Activated CD8-positive, alpha-beta T cell treated with anti-CD3 and anti-CD28 coated beads for 36 hours (primary cell): ENCODE measurements at regions of chr3 and their contacts with region 1.

Region 1: GRCh38 chr3:171822431-171823106 is 12.3 kb upstream of the PLD1 start:
- DNase-seq: no peak
- ATAC-seq: no peak
- H3K4me3 Mint-ChIP-seq: no peak overlapping the region
- H3K27ac Mint-ChIP-seq: no peak overlapping the region
- H3K4me1 Mint-ChIP-seq: peaks cover 9% of the 10 kb centered on the region
- H3K27me3 Mint-ChIP-seq: peaks cover 19% of the 10 kb centered on the region
- CTCF ChIP-seq: no peak

Region 2: GRCh38 chr3:171788546-171789351 is 33.8 kb before region 1 on chr3:
- CTCF ChIA-PET with region 1: no interaction called
- POLR2A ChIA-PET with region 1: no interaction called
- intact Hi-C with region 1: loop called (anchors 5 kb)
- DNase-seq: no peak
- ATAC-seq: no peak
- H3K4me3 Mint-ChIP-seq: no peak overlapping the region
- H3K27ac Mint-ChIP-seq: no peak overlapping the region
- H3K4me1 Mint-ChIP-seq: no peaks in the 10 kb centered on the region
- H3K27me3 Mint-ChIP-seq: no peaks in the 10 kb centered on the region
- CTCF ChIP-seq: no peak